ENCODE measurements at regions of chr5 and their contacts with region 1.

Region 1: GRCh38 chr5:177425801-177426565 is 493 bp upstream of the GRK6 start:
- DNase-seq: peak; percentile 99
- H3K4me3 Mint-ChIP-seq: peak overlapping the region; percentile 86
- H3K27ac Mint-ChIP-seq: peak overlapping the region; percentile 94
- H3K4me1 Mint-ChIP-seq: peaks cover 51% of the 10 kb centered on the region
- H3K27me3 Mint-ChIP-seq: no peaks in the 10 kb centered on the region

Region 2: GRCh38 chr5:177311723-177312648 is 114.0 kb before region 1 on chr5 and contains the start of gene MXD3:
- intact Hi-C with region 1: loop called (anchors 1 kb)
- DNase-seq: peak; percentile 96
- H3K4me3 Mint-ChIP-seq: peak within 1 kb of the TSS; percentile 89
- H3K27ac Mint-ChIP-seq: peak within 1 kb of the TSS; percentile 85
- H3K4me1 Mint-ChIP-seq: peaks cover 44% of the 10 kb centered on the region
- H3K27me3 Mint-ChIP-seq: no peaks in the 10 kb centered on the region
- total RNA-seq, gene MXD3: 9.6 and 11.8 TPM in 2 replicates

Region 3: DNA sequence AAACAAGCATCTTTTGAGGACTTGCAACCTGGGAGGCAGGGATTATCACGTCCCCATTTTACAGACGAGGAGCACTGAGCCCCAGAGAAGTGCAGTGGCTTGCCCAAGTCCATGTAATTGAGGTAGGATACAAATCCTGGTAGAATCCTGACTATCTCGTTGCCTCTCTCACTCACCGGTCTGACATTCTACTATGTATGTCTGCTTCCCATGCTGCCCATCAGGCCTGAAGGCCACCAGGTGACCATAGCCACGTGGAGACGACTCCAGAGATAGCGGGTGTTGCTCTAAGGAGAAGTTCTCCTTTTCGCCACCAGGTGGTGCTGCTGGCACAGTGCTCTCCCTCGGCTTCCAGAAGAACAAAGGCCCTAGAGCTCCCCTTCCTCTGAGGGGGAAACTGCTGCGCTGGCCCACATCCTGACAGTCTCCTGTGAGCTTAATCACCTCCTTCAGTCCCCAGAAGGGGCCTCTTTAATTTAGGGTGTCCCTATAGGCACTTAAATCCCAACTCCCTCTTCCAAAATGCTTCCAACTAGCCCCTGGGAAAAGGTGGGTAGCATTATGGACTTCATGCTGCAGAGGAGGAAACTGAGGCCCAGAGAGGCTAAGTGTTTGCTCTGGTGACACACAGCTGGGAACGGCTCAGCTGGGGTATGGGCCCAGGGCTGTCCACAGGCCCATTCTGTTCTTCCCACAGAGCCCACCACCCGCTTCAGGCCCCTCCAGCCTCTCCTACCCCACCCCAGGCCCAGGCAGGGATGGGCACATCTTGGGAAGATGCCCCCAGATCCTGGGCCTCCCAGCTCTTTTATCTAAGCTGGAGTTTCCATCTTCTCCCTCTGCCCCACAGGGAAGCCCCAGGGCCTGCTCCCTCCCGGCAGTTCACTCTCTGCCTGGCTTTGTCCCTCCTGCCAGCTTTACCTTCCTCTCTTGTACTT is 35.4 kb before region 1 on chr5:
- intact Hi-C with region 1: loop called (anchors 1 kb)
- DNase-seq: peak; percentile 80
- H3K4me3 Mint-ChIP-seq: peak overlapping the region; percentile 5
- H3K27ac Mint-ChIP-seq: peak overlapping the region; percentile 65
- H3K4me1 Mint-ChIP-seq: peaks cover 34% of the 10 kb centered on the region
- H3K27me3 Mint-ChIP-seq: peaks cover 3% of the 10 kb centered on the region

Region 4: GRCh38 chr5:177446200-177447065 is 20.4 kb after region 1 on chr5 and contains the start of gene PRR7:
- intact Hi-C with region 1: loop called (anchors 1 kb)
- DNase-seq: peak; percentile 62
- H3K4me3 Mint-ChIP-seq: peak within 1 kb of the TSS; percentile 77
- H3K27ac Mint-ChIP-seq: peak within 1 kb of the TSS; percentile 90
- H3K4me1 Mint-ChIP-seq: peaks cover 30% of the 10 kb centered on the region
- H3K27me3 Mint-ChIP-seq: peaks cover 9% of the 10 kb centered on the region
- total RNA-seq, gene PRR7: 10.3 and 11.2 TPM in 2 replicates

Region 5: DNA sequence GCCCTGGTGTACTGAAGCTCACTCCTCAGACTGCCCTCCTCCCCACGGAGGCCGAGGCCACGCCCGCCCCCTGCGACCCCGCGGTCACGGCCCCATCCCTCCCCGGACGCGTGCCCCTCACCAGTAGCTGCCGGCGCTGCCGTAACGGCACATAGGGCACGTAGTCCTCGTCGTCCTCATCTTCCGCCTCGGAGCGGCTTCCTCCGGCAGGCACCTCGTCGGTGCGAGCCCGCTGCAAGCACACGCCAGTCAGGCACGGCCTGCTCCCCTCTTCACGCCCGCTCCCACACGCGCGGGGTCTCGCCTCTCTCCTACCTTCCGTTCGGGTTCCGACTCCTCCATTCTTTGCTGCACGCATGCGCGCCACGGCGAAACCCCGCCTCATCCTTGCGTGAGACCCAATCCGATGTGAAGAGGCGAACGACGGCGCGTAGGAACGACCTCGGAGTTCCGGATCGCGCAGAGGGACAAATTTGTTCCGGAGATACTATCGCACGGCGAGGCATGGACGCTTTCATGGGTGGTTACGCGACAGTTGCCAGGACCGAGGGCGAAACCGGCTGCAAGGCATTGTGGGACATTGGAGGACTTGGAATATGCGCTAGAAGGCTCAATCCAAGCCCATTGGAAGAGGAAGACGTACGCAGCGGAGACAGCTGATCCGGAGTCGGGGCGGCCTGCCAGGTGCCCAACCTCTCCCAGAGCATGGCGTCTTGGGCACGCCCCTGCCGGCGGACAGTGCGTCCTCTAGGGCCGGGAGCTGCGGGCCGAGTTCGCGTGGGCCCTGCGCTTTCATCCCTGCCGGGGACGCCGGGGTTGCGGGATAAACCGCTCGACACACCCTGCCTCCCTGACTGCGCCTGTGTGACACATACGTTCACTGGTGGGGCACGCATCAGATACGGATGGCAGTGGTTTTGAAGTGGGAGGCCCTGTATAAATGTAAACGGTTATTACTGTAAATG is 90.9 kb after region 1 on chr5 and contains the start of gene DDX41:
- intact Hi-C with region 1: loop called (anchors 2 kb)
- DNase-seq: peak; percentile 96
- H3K4me3 Mint-ChIP-seq: peak within 1 kb of the TSS; percentile 91
- H3K27ac Mint-ChIP-seq: peak within 1 kb of the TSS; percentile 88
- H3K4me1 Mint-ChIP-seq: peaks cover 46% of the 10 kb centered on the region
- H3K27me3 Mint-ChIP-seq: no peaks in the 10 kb centered on the region
- total RNA-seq, gene DDX41: 151 and 166 TPM in 2 replicates

Measured in activated T-helper 1 cell treated with anti-CD3 and anti-CD28 coated beads, Interleukin-12 subunit alpha, Interleukin-12 subunit beta, Interleukin-2, Interleukin-4 antibody, amounts not matched to agents 30 ng/mL and 10 ng/mL and 1 ng/mL, durations not matched to agents 14 hours and 24 hours and 36 hours (primary cell).